PC-3 (cell line): ENCODE measurements at regions of chr2 and their contacts with region 1.

Region 1: DNA sequence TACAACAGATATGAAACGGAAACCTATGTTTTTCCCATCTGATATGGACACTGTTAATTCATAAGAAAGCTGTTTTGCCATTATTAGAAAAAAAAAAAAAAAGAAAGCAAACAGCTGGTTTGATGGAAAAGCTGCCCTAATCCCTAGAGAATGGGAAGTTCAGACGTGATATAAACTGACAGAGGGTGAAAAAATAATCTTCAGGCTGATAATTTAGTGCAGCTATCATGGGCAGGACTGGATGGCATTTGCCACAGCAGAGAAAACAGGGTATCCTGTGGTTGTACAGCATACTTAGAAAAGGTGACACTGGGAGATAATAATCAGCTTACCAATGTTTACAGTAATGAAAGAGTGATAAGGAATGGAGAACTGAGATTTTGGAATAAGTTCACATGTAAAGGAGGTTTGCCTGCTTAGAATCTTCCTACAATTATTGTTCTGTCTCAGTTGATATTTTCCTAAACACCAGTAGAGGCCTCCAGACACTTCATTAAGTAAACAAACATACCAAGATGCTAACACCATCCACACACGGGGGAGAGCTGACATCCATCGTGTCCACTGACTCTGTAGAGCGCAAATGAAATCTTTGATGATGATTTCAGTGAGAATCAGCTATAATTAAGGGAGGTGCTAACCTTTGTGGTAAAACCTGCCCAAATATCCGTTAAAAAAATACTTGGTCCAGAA is 211.6 kb upstream of the MMADHC start:
- DNase-seq: peak; percentile 44
- ATAC-seq: peak; percentile 80
- H3K4me3 ChIP-seq: no peak overlapping the region
- H3K27ac ChIP-seq: no peak overlapping the region
- H3K4me1 ChIP-seq: peaks cover 8% of the 10 kb centered on the region
- H3K27me3 ChIP-seq: no peaks in the 10 kb centered on the region
- CTCF ChIP-seq: peak; percentile 65

Region 2: DNA sequence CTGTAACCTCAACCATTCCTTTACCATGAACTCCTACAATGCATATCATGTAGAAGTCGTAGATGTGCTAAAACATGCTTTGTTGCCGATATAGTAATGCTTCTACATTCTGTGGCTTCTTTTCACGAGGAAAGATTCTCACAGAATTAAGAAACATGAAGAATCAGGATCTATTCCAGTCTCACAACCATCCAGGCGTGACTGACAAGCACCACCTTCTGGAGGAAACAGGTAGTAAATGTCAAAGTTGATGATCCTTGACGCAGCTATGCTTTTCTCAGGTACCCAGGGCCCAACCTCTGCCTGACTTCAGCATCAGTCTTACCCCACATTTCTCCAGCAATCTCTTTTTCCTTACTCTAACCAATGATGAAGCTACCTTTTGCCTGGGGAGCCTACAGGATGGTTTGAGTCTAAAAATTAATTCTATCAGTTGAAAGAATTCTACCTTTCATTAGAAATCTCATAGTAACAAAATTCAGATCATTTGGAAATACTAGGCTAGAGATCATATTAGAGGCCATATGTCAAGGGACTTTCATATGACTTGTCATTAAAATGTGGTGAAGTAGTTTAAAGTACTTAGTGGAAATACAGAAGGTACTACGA is 811.6 kb after region 1 on chr2:
- CTCF ChIA-PET with region 1: no interaction called
- POLR2A ChIA-PET with region 1: no interaction called
- intact Hi-C with region 1: loop called (anchors 2 kb)
- DNase-seq: peak; percentile 85
- ATAC-seq: peak; percentile 70
- H3K4me3 ChIP-seq: no peak overlapping the region
- H3K27ac ChIP-seq: 0 out of 2 replicates have a peak overlapping the region, but pooled peaks have one; percentile 6
- H3K4me1 ChIP-seq: peaks cover 19% of the 10 kb centered on the region
- H3K27me3 ChIP-seq: no peaks in the 10 kb centered on the region
- CTCF ChIP-seq: peak; percentile 85